Activated T-helper 1 cell treated with anti-CD3 and anti-CD28 coated beads, Interleukin-12 subunit alpha, Interleukin-12 subunit beta, Interleukin-2, Interleukin-4 antibody, amounts not matched to agents 30 ng/mL and 10 ng/mL and 1 ng/mL, durations not matched to agents 14 hours and 24 hours and 36 hours (primary cell): ENCODE measurements at regions of chr1 and their contacts with region 1.

Region 1: GRCh38 chr1:166875734-166876539 is at the start of gene TADA1:
- DNase-seq: peak; percentile 97
- H3K4me3 Mint-ChIP-seq: peak within 1 kb of the TSS; percentile 92
- H3K27ac Mint-ChIP-seq: peak within 1 kb of the TSS; percentile 98
- H3K4me1 Mint-ChIP-seq: peaks cover 50% of the 10 kb centered on the region
- H3K27me3 Mint-ChIP-seq: peaks cover 3% of the 10 kb centered on the region
- total RNA-seq, gene TADA1: 15.6 and 17.3 TPM in 2 replicates

Region 2: DNA sequence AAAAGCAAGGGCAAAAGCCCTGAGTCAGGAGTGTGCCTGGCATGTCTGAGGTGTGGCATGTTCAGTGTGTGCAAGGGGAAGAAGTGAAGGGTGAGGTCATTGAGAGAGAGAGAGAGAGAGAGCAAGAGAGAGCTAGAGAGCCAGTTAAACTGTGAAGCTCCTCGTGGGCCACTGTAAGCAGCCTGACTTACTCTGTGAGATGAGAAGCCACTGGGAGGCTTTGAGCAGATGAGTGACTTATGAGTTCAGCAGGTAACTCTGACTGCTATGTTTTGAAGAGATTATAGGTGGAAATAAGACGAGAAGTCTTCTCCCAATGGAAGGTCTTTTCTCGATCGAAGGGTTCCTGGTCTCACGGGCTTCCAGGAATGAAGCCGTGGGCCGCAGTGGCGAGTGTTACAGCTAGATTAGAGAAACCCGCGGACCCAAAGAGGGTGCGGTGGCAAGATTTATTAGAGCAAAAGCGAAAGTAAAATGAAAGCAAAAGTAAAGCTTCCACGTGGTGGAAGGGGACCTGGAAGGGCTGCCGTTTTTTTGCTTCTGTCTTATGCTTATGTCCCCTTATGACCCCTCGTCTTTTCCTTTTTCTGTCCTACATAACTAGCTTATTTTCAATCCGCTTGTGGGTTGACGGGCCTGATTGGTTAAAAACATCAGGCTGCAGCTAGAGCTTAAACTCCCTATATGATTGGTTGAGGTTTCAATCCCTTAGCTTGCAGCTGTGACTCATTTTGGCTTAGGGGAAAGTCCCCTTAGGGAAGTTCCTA is 386.1 kb before region 1 on chr1:
- intact Hi-C with region 1: loop called (anchors 1 kb)
- DNase-seq: peak; percentile 40
- H3K4me3 Mint-ChIP-seq: no peak overlapping the region
- H3K27ac Mint-ChIP-seq: no peak overlapping the region
- H3K4me1 Mint-ChIP-seq: peaks cover 15% of the 10 kb centered on the region
- H3K27me3 Mint-ChIP-seq: no peaks in the 10 kb centered on the region

Region 3: GRCh38 chr1:166902271-166902670 is 26.3 kb after region 1 on chr1:
- intact Hi-C with region 1: loop called (anchors 1 kb)
- DNase-seq: no peak
- H3K4me3 Mint-ChIP-seq: no peak overlapping the region
- H3K27ac Mint-ChIP-seq: no peak overlapping the region
- H3K4me1 Mint-ChIP-seq: peaks cover 29% of the 10 kb centered on the region
- H3K27me3 Mint-ChIP-seq: peaks cover 12% of the 10 kb centered on the region

Region 4: GRCh38 chr1:167059045-167059808 is 183.3 kb after region 1 on chr1:
- intact Hi-C with region 1: loop called (anchors 1 kb)
- DNase-seq: peak; percentile 60
- H3K4me3 Mint-ChIP-seq: no peak overlapping the region
- H3K27ac Mint-ChIP-seq: no peak overlapping the region
- H3K4me1 Mint-ChIP-seq: peaks cover 8% of the 10 kb centered on the region
- H3K27me3 Mint-ChIP-seq: no peaks in the 10 kb centered on the region

Region 5: DNA sequence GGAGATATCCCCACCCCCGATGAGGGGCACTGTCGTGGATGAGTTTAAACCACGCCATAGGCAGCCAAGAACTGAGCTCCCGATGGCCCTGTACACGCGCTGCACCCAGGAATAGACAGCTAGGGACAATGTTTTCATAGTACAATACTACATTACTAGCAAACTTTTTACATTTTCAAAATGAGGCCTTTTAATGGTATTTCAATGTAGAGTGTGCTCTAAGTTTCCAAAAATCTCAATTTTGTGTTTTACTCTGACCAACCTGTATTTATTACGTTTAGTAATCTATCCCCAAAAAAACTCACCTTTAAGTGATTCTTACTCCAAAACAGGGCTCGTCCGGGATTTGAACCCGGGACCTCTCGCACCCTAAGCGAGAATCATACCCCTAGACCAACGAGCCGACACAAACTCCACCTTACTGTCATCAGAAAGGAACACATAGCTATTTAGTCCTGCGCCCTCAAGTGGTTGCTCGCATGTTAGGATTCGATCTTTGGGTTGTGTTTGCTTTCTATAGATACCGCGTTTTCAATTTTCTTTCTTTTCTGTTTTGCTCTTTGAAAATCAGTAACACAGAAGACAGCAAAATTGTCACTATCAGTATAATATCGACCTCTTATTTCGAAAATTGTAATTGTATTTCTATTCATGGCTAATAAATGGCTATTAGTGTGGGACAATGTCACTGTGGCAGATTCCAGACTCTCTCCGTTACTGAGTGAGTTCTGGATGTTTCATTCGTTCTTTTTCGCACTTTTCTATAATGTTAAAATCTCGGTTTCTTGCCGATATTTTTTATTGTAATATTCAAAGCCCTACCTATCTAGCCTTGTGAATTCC is 839.4 kb after region 1 on chr1:
- intact Hi-C with region 1: loop called (anchors 10 kb)
- DNase-seq: peak; percentile 84
- H3K4me3 Mint-ChIP-seq: peak overlapping the region; percentile 96
- H3K27ac Mint-ChIP-seq: peak overlapping the region; percentile 91
- H3K4me1 Mint-ChIP-seq: peaks cover 61% of the 10 kb centered on the region
- H3K27me3 Mint-ChIP-seq: peaks cover 21% of the 10 kb centered on the region